H1 (cell line): ENCODE measurements at regions of chr4 and their contacts with region 1.

Region 1: GRCh38 chr4:139177868-139178611 is 1.0 kb upstream of the ELF2 start:
- DNase-seq: peak; percentile 79 to 96
- H3K4me3 ChIP-seq: peak overlapping the region; percentile 64 to 97 (median 76)
- H3K27ac ChIP-seq: peak overlapping the region; percentile 95
- H3K4me1 ChIP-seq: peaks cover 0 to 16% (median 5%) of the 10 kb centered on the region in 4 experiments; a peak in 3 of 7 replicates
- H3K27me3 ChIP-seq: peaks cover 0 to 2% (median 0%) of the 10 kb centered on the region in 4 experiments; a peak in 1 of 7 replicates
- CTCF ChIP-seq: 0 out of 4 replicates have a peak, but pooled peaks of 1 of the 3 experiments have one; percentile 0
- EP300 ChIP-seq: no peak
- POLR2A ChIP-seq: peak in 1 of 2 experiments; percentile 52; a peak in 2 of 3 replicates
- RAD21 ChIP-seq: peak in 1 of 2 experiments; percentile 17; a peak in 1 of 4 replicates

Region 2: GRCh38 chr4:138938366-138938690 is 239.7 kb before region 1 on chr4:
- CTCF ChIA-PET with region 1: no interaction called
- POLR2A ChIA-PET with region 1: no interaction called
- DNase-seq: no peak
- H3K4me3 ChIP-seq: no peak overlapping the region
- H3K27ac ChIP-seq: no peak overlapping the region
- H3K4me1 ChIP-seq: peaks cover 3 to 8% (median 6%) of the 10 kb centered on the region in 4 experiments; a peak in 6 of 7 replicates
- H3K27me3 ChIP-seq: no peaks in the 10 kb centered on the region
- CTCF ChIP-seq: peak in 2 of 3 experiments; percentile 48 to 57; a peak in 2 of 4 replicates
- EP300 ChIP-seq: no peak
- POLR2A ChIP-seq: no peak
- RAD21 ChIP-seq: peak; percentile 81 to 83

Region 3: DNA sequence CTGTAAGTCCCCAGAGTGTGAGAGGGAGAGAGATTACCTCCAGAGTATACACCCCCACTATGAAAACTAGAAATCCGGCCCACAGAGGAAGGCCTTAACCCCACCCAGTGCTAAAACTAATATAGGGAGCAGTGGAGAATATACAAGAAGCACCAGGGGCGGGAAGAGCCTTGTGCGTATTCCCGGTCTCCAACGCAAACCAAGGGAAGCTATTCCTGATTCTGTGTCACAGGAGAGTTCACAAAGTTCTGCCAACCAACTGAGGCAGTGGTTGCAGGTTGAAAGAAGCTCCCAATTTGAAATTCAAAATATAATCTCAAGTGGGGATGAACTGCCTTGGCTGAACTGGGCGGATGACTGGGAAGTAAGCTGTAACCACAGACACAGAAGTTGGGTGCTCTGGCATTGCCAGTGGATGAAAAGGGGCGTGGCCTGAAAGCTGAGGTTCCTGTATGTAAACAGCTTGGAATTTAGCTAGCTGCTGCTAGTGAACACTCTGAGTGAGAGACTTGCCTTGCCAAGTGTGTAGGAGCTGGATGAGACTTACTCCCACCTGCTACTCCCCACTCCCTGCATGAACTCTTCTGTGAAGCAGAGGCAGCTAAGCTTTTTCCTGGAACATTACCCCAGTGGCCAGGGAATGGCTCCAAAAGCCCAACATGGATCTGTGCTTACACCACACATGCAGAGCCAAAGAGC is 33.7 kb before region 1 on chr4:
- CTCF ChIA-PET with region 1: no interaction called
- POLR2A ChIA-PET with region 1: interaction called, 10 read pairs
- DNase-seq: no peak
- H3K4me3 ChIP-seq: no peak overlapping the region; a peak in 1 of 8 replicates
- H3K27ac ChIP-seq: peak overlapping the region; percentile 60
- H3K4me1 ChIP-seq: peaks cover 12 to 21% (median 21%) of the 10 kb centered on the region in 4 experiments
- H3K27me3 ChIP-seq: no peaks in the 10 kb centered on the region
- CTCF ChIP-seq: no peak
- EP300 ChIP-seq: no peak
- POLR2A ChIP-seq: no peak
- RAD21 ChIP-seq: no peak

Region 4: GRCh38 chr4:139153420-139154133 is 24.5 kb before region 1 on chr4:
- CTCF ChIA-PET with region 1: interaction called, 3 read pairs
- POLR2A ChIA-PET with region 1: interaction called, 44 read pairs
- DNase-seq: no peak
- H3K4me3 ChIP-seq: peak overlapping the region in 1 of 4 experiments; percentile 21; a peak in 1 of 8 replicates
- H3K27ac ChIP-seq: peak overlapping the region; percentile 78; the same call in 1 of the 2 replicates
- H3K4me1 ChIP-seq: peaks cover 8 to 19% (median 19%) of the 10 kb centered on the region in 4 experiments
- H3K27me3 ChIP-seq: no peaks in the 10 kb centered on the region
- CTCF ChIP-seq: no peak
- EP300 ChIP-seq: peak in 1 of 2 experiments; percentile 73; a peak in 1 of 3 replicates
- POLR2A ChIP-seq: peak in 1 of 2 experiments; percentile 22; a peak in 1 of 3 replicates
- RAD21 ChIP-seq: no peak

Region 5: DNA sequence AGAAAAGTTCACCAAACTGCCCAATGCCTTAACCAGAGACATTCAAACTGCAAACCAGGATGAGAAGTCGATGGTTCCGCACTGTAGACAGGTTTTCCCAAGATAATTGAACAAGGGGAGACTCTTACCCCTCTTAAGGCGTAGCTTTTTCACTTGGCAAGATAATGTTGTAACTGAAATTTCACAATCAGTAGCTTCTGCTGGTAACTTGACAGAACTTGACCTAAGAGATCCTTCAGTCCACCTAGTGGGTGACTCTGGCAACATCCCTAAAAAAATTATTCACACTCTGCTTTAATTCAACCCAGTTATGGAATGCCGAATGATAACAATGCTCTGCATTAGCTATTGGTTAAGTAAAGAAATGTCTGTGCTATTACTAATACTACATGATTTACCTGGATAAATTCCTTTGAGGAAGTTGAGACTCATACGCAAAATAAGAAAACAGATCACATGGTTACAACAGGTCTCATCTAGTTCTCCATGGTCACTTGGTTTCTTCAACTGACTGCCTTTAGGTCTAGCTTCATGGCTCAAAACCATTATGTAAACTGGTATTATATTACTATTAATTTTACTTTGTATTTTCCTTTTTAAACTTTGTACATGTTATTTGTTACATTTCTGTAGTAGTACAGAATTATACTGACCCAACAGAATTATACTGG is 10.1 kb before region 1 on chr4:
- CTCF ChIA-PET with region 1: no interaction called
- POLR2A ChIA-PET with region 1: interaction called, 14 read pairs
- DNase-seq: no peak
- H3K4me3 ChIP-seq: no peak overlapping the region
- H3K27ac ChIP-seq: no peak overlapping the region; the same call in 1 of the 2 replicates
- H3K4me1 ChIP-seq: peaks cover 1 to 11% (median 7%) of the 10 kb centered on the region in 4 experiments; a peak in 4 of 7 replicates
- H3K27me3 ChIP-seq: no peaks in the 10 kb centered on the region
- CTCF ChIP-seq: peak in 2 of 3 experiments; percentile 50 to 58; a peak in 2 of 4 replicates
- EP300 ChIP-seq: no peak
- POLR2A ChIP-seq: no peak
- RAD21 ChIP-seq: peak; percentile 71 to 78

Region 6: DNA sequence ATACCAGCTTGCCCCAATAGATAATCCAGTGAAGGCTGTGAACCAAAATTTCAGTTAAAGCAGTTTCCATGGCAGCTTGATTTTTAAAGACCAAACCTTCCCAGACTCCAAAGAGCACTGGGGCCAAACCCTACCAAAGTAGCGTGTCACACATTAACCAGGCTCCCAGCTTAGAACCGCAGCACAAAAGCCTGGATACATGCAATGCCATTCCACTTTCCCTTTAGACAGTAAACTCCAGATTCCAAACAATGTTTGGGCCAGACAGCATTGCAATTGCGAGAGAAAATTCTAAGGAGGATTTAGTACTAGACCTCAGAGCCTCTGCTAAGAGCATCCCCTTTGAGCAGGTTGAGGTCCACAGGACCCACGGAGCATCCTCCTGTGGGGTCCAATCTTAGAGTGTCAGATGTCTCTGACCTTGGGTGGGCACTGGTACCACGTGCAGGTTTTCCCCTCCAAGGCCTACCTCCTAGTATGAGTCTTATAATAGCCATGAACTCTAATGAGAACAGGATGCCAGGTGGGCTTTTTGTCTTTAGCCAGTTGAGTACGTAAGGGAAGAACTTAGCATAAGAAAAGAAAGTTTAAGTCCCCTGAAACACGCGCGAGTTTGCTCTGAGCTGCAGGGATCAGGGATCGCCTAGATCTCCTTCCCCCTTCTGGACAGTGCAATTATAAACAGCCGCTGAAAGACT is 63.2 kb after region 1 on chr4:
- CTCF ChIA-PET with region 1: no interaction called
- POLR2A ChIA-PET with region 1: interaction called, 14 read pairs
- DNase-seq: peak in 1 of 2 experiments; percentile 7
- H3K4me3 ChIP-seq: peak overlapping the region in 1 of 4 experiments; percentile 6; a peak in 1 of 8 replicates
- H3K27ac ChIP-seq: peak overlapping the region; percentile 53
- H3K4me1 ChIP-seq: peaks cover 5 to 19% (median 16%) of the 10 kb centered on the region in 4 experiments
- H3K27me3 ChIP-seq: no peaks in the 10 kb centered on the region
- CTCF ChIP-seq: no peak
- EP300 ChIP-seq: no peak
- POLR2A ChIP-seq: no peak
- RAD21 ChIP-seq: no peak

Region 7: DNA sequence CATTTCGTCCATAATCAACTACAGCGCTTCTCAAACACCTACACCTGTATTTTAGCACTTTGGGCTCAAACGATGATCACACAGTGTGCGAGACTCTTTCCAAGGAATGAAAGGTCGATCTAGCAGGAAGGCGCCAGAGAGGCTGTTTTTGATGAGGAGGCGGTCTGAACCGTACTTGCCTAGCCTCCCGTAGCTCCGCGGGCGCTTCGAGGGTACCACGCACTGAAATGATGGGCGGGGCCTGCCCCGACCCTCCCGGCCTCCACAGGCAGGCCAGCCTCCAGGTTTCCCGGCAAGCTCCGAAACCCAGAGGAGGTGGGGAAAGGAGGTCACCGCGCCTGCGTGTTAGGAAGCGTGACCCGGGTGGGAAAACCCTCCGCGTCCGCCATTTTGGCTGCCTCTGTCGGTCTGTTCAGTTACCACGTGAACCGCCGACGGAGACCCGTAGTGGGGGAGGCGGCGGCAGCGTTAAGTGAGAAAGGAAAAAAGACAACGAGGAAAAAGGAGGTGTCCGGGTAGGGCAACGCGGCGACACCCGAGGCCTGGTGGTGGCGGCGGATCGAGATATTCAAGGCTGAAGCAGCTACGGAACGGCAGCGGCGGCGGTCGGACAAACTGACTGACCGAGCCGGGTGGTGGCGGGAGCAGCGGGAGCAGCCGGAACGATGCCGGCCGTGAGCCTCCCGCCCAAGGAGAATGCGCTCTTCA is 123.2 kb after region 1 on chr4 and contains the start of gene NAA15:
- CTCF ChIA-PET with region 1: interaction called, 6 read pairs
- POLR2A ChIA-PET with region 1: interaction called, 31 read pairs
- DNase-seq: peak; percentile 95 to 96
- H3K4me3 ChIP-seq: peak within 1 kb of the TSS; percentile 91 to 100 (median 93)
- H3K27ac ChIP-seq: peak within 1 kb of the TSS; percentile 83
- H3K4me1 ChIP-seq: peaks cover 0 to 2% (median 0%) of the 10 kb centered on the region in 4 experiments; a peak in 1 of 7 replicates
- H3K27me3 ChIP-seq: no peaks in the 10 kb centered on the region
- CTCF ChIP-seq: no peak
- EP300 ChIP-seq: no peak; a peak in 1 of 3 replicates
- POLR2A ChIP-seq: no peak; a peak in 1 of 3 replicates
- RAD21 ChIP-seq: peak in 1 of 2 experiments; percentile 10; a peak in 2 of 4 replicates
- total RNA-seq, gene NAA15: 119 and 124 TPM in 2 replicates

Region 8: DNA sequence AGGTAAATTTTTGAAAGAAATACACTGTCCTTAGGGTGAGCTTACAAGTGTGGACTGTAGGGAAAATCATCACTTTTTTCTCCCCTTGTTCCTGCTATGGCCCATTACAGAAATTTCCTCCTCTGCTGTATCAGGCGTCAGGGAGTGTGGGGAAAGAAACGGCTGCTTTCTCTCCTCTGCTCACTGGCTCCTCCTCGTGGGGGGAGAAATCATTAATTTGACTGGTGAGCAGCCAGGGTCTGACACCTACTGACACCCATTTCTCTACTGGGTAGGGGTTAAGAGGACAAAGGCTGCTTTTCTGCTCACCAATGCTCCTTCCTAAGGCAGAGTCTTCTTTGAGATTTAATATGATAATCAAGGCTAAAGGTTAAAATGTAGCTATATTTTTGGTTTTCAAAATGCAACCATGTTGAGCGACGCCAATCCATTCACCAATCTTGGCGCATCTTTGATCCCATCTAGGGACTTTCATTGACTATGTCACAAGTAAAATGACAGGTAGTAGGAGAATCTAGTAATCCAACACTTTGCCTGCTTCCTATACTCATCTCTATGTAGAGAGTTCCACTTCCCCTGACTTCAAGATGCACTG is 352.9 kb after region 1 on chr4:
- CTCF ChIA-PET with region 1: no interaction called
- POLR2A ChIA-PET with region 1: no interaction called
- DNase-seq: peak in 1 of 2 experiments; percentile 91
- H3K4me3 ChIP-seq: no peak overlapping the region
- H3K27ac ChIP-seq: no peak overlapping the region
- H3K4me1 ChIP-seq: no peaks in the 10 kb centered on the region
- H3K27me3 ChIP-seq: no peaks in the 10 kb centered on the region
- CTCF ChIP-seq: peak; percentile 66 to 92 (median 85)
- EP300 ChIP-seq: no peak
- POLR2A ChIP-seq: no peak
- RAD21 ChIP-seq: peak; percentile 78 to 83